Head of caudate nucleus (tissue), 42 donors: ENCODE measurements at regions of chr2 and their contacts with region 1.

Region 1: DNA sequence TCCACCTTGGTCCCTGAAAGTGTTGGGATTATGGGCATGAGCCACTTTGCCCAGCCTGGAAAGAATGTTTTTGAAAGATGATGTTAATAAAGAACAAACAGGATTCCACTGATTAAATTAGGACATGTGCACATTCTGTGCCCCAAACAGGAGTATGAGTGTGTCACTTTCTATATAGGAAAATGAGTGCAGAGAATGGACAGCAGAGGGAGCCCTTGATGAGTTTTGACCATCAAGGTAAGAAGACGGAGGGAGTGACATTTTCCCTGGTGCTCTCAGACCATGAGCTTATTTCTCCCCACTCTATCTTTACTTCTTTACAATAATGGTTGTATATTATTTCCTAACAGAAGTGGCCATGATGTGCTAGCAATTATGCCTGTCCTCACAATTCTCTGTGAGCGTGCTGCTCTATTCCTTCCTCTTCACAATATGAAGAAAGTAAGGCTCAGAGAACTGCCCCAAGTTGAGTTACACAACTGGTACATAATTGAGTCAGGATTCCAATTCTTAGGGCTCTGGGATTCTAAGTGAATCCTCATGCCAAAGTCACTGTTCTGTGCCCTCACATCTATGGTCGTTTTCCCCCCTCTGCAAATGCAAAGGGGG is 20.6 kb downstream of the RPL37A start:
- DNase-seq: peak in 34 of 42 donors; percentile 32 to 88 (median 67)

Region 2: DNA sequence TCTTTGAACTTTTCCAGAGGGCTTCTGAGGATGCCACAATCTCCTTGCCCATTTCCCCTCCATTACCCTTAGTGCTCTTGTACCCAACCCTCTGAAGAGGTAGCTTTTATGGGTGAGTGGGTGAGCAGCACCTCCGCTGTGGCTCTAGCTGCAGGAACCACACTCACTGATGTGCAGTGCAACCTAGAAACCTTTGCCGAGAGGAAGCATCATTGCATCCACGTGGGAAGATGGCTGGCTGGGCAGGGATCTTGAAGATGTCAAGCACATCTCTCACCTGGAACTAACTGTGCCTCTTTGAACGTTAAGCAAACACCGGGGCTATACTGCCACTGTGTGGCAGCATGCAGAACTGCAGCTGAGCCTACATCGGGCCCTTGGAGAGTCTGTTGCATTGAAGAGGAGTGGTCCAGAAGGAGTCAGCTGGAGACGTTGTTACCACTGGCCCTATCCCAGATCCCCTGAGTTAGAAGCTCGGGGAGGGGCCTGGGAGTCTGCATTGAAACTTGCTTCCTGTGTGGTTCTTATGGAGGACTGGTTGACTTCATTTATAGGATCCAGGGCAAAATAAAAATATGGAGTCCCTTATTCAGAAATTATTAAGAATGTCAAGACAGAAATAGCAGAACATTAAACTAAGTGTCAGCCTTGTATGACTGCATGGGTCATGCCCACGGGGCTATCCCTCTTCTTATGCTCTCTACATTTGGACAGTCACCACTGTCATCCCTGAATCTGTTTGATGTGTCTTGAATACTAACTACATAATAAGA is 147.4 kb after region 1 on chr2:
- intact Hi-C with region 1: loop called (anchors 1 kb)
- DNase-seq: peak; percentile 45 to 90 (median 79)